WTC11 (cell line): ENCODE measurements at regions of chr2 and their contacts with region 1.

Region 1: GRCh38 chr2:218691234-218691633 is 19.3 kb downstream of the STK36 start:
- DNase-seq: no peak
- ATAC-seq: no peak
- H3K4me3 Mint-ChIP-seq: no peak overlapping the region
- H3K27ac Mint-ChIP-seq: no peak overlapping the region
- H3K4me1 Mint-ChIP-seq: no peaks in the 10 kb centered on the region
- H3K27me3 Mint-ChIP-seq: no peaks in the 10 kb centered on the region
- CTCF ChIP-seq: no peak

Region 2: DNA sequence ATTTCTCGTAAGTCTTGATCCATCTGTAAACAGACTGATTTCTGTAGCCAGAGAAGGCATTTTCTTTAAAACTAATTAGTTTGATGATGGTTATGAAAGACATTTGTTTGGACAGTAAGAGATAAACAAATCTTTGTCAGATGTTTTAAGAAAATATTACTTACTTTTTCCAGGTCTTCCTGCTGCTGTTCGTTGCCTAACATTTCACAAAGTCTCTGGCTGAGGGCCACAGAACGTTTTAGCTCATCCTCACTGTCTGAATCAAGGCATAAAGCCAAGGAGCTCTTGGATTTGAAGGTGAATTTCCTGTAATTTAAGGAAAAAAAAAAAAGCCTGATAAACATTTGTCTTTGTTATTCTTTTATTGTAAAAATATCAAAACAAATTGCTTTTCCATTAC is 214.6 kb before region 1 on chr2:
- CTCF ChIA-PET with region 1: no interaction called
- POLR2A ChIA-PET with region 1: no interaction called
- DNase-seq: no peak
- ATAC-seq: no peak
- H3K4me3 Mint-ChIP-seq: no peak overlapping the region
- H3K27ac Mint-ChIP-seq: peak overlapping the region; percentile 49; the same call in 1 of the 2 replicates
- H3K4me1 Mint-ChIP-seq: no peaks in the 10 kb centered on the region
- H3K27me3 Mint-ChIP-seq: no peaks in the 10 kb centered on the region
- CTCF ChIP-seq: no peak

Region 3: GRCh38 chr2:218582076-218582475 is 109.2 kb before region 1 on chr2:
- CTCF ChIA-PET with region 1: no interaction called
- POLR2A ChIA-PET with region 1: no interaction called
- DNase-seq: no peak
- ATAC-seq: no peak
- H3K4me3 Mint-ChIP-seq: no peak overlapping the region
- H3K27ac Mint-ChIP-seq: no peak overlapping the region
- H3K4me1 Mint-ChIP-seq: peaks cover 20% of the 10 kb centered on the region
- H3K27me3 Mint-ChIP-seq: no peaks in the 10 kb centered on the region
- CTCF ChIP-seq: no peak

Region 4: DNA sequence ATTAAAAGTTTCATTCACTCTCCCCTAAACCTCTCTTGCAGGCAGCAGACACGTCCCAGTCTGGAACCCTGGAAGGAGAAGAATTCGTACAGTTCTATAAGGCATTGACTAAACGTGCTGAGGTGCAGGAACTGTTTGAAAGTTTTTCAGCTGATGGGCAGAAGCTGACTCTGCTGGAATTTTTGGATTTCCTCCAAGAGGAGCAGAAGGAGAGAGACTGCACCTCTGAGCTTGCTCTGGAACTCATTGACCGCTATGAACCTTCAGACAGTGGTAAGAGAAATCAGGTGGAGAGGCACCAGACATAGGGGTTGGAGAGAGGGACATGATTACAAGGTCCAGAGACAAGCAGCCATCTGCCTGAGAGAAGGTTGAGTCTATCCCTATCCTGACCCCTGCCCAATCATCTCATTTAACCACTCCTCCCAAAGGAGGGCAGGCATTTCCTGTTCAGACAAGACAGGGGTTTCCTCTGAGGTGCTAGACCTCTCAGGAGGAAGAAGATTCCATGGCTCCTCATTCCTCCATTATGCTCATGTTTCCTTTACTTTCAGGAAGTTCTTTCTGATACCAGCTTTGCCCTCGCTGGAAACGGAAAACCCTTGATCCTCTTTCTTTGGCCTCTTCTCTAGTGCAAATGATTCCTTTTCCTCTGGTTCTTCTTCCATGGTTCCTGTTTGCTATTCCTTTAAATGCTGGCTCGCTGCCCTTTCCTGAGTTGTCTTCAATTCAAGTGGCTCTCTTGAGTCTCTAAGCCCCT is 68.4 kb before region 1 on chr2:
- CTCF ChIA-PET with region 1: no interaction called
- POLR2A ChIA-PET with region 1: no interaction called
- DNase-seq: no peak
- ATAC-seq: peak; percentile 46
- H3K4me3 Mint-ChIP-seq: no peak overlapping the region
- H3K27ac Mint-ChIP-seq: no peak overlapping the region
- H3K4me1 Mint-ChIP-seq: peaks cover 3% of the 10 kb centered on the region
- H3K27me3 Mint-ChIP-seq: no peaks in the 10 kb centered on the region
- CTCF ChIP-seq: no peak

Region 5: DNA sequence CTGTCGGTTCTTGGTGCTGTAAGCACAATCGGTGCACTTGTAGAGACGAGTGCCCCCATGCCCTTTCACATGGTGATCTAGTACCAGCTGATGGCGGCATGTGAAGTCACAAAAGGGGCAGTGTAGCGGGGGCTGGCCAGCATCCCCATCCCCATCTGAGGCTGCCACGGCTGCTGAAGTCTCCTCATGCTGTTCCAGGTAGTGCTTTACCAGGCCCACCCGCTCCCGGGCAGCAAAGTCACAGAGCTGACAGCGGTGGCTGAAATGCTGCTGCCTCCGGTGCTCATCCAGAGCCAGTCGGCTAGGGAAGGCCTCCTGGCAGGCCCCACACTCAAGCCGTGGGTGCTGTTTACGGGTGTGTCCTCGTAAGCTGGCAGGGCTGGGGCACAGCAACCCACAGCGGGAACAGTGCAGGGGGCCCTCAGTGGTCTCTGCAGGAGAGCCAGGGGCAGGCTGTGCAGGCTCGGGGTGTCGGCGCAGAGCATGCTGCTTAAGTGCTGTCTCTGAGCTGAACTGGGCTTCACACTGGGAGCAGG is 49.0 kb before region 1 on chr2:
- CTCF ChIA-PET with region 1: no interaction called
- POLR2A ChIA-PET with region 1: no interaction called
- DNase-seq: no peak
- ATAC-seq: no peak
- H3K4me3 Mint-ChIP-seq: no peak overlapping the region
- H3K27ac Mint-ChIP-seq: no peak overlapping the region
- H3K4me1 Mint-ChIP-seq: no peaks in the 10 kb centered on the region
- H3K27me3 Mint-ChIP-seq: no peaks in the 10 kb centered on the region
- CTCF ChIP-seq: no peak

Region 6: DNA sequence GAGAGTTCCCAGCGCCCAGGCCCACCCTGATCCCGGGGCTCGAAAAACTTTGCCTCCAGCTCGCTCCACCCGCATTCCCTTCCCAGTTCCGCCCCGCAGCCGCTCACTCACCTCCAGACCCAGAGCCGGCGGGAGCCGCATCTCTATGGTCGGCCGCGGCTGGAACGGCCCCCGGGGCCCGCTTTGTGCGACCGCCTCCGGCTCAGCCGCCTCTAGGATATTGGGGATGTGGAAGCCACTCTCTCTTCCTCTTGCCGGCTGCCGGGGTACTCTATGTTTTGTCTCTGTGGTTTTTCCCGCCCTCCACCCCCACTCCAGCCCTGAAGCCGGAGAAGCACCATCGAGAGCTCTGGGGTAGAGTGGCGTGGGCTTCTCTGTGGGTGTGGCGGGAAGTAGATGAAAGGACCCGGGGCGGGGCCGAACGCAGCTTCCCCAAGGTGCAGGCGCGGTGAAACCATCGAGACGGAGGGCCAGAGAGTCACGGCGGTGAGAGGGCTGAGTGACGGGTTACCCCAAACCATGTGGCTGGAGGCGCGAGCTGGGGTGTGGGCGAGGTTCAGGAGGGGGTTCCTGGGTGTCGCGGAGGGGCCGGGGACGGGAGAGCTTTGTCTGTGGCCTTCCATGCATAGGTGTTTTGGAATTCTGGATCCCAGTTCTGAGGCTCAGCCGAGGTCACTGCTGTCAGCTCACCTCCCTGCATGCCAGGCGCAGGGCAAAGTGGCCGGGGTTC is 31.8 kb before region 1 on chr2 and contains the starts of genes BCS1L and ZNF142:
- CTCF ChIA-PET with region 1: interaction called, 26 read pairs
- POLR2A ChIA-PET with region 1: no interaction called
- DNase-seq: peak; percentile 96
- ATAC-seq: peak; percentile 91
- H3K4me3 Mint-ChIP-seq: peak within 1 kb of the TSS; percentile 93
- H3K27ac Mint-ChIP-seq: peak within 1 kb of the TSS; percentile 90
- H3K4me1 Mint-ChIP-seq: peaks cover 9% of the 10 kb centered on the region
- H3K27me3 Mint-ChIP-seq: no peaks in the 10 kb centered on the region
- CTCF ChIP-seq: no peak
- total RNA-seq, gene BCS1L: 31.4 to 35.4 TPM (median 32.7 TPM) in 3 replicates
- total RNA-seq, gene ZNF142: 25.1 to 33.5 TPM (median 28.7 TPM) in 3 replicates

Region 7: DNA sequence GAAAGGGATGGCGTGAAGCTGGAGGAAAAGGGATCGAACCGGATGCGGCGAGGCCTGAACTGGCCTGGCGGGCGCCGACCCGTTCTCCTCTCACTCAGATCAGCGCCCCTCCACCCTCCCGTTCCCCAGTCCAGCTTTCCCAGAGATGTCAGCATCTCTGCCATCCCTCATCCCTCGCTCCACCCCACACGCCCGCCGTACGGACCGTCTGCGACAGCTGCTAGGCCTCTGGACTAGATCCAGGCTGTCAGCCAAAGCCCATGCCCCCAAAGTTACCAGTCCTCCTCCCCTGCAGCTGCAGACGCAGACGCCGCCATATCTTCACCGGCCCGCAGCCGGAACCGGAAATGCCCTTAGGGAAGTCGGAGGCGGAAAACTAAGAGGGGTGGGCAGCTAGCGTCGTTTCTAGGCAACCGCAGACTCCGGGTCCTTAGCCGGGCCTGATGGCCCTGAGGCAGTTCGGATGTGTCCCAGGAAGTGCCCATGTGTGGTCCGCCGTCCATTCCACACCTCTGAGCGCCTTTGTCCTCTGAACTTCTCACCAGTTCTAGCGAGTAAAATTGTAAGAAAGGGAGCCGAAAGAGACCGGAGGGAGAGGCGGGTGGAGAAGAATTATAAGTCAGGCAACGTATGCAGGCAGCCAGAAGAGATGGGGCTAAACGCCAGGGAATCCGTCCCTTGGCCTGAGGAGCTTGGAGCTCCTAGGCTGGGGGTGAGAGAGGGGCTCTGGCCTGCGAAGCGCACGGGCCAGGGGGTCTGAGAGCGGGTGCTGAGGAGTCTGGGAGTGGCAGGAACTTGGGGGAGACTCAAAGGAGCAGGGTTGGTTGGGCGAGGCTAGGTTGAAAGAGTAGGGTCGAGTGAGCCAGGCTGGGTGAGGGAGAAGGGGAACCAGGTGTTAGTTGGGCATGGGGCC is 19.3 kb before region 1 on chr2 and contains the starts of genes RNF25 and STK36:
- CTCF ChIA-PET with region 1: interaction called, 14 read pairs
- POLR2A ChIA-PET with region 1: interaction called, 4 read pairs
- DNase-seq: peak; percentile 85
- ATAC-seq: peak; percentile 96
- H3K4me3 Mint-ChIP-seq: peak within 1 kb of the TSS; percentile 98
- H3K27ac Mint-ChIP-seq: peak within 1 kb of the TSS; percentile 93
- H3K4me1 Mint-ChIP-seq: peaks cover 13% of the 10 kb centered on the region
- H3K27me3 Mint-ChIP-seq: no peaks in the 10 kb centered on the region
- CTCF ChIP-seq: no peak
- total RNA-seq, gene RNF25: 20.3 to 25.1 TPM (median 23.9 TPM) in 3 replicates
- total RNA-seq, gene STK36: 41.0 to 47.7 TPM (median 42.7 TPM) in 3 replicates

Region 8: DNA sequence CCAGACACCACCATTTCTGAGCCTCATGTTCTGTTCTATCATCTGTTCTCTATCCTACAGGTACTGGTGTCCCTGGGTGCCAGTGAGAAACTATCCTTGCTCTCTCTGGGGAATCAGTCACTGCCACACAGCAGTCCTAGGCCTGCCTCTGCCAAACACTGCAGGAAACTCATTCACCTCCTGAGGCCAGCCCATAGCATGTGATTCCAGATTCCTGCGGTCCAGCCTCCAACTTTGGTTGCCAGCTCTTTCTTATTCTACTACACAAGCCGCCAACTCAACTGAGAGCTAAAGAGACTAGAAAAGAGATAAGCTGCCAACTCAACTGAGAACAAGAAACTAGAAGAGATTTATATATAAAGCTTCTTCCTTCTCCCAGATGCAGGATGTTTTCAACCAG is 10.6 kb after region 1 on chr2:
- CTCF ChIA-PET with region 1: interaction called, 11 read pairs
- POLR2A ChIA-PET with region 1: no interaction called
- DNase-seq: no peak
- ATAC-seq: no peak
- H3K4me3 Mint-ChIP-seq: no peak overlapping the region
- H3K27ac Mint-ChIP-seq: no peak overlapping the region
- H3K4me1 Mint-ChIP-seq: no peaks in the 10 kb centered on the region
- H3K27me3 Mint-ChIP-seq: no peaks in the 10 kb centered on the region
- CTCF ChIP-seq: no peak

Region 9: DNA sequence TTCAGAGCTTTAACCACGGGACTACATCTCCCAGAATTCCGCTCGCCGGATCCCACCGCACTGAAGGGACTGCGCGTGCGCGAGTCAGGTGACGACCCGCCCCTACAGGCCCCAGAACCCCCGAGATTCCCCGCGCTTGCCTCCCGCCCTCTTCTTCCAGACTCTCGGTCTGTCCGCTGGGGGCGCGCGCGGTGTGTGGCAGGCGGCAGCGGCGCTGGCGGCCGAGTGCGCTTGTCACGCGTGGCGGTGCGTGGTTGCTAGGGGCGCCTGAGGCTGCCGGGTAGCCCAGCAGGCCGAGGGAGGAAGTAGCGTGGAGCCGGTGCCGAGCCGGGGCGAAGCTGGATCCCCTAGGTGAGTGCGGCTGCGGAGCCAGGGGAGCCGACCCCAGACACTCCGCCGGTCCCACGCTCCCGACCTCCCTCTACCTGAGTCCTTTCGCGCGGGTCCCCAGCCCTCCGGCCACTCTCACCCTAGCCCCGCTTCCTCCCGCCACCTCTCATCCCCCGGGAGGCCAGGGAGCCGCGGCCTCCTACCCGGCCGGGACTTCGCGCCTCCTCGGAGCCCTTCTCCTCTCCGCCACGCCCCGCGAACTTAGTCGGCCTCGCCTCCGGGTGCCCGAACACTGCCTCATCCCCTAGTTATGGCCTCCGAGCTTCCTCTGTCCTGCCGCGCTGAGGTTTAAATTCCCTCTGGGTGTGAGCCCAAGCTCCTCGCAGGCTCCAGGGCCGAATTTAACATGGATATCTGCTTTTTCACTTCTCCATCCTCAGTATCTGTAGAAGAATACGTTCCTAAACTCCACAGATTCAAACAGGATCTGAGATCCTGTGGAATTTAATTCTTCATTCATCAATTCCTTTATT is 19.7 kb after region 1 on chr2 and contains the start of gene TTLL4:
- CTCF ChIA-PET with region 1: interaction called, 20 read pairs
- POLR2A ChIA-PET with region 1: interaction called, 3 read pairs
- DNase-seq: peak; percentile 97
- ATAC-seq: peak; percentile 93
- H3K4me3 Mint-ChIP-seq: peak within 1 kb of the TSS; percentile 98
- H3K27ac Mint-ChIP-seq: peak within 1 kb of the TSS; percentile 56; the same call in 1 of the 2 replicates
- H3K4me1 Mint-ChIP-seq: peaks cover 11% of the 10 kb centered on the region
- H3K27me3 Mint-ChIP-seq: no peaks in the 10 kb centered on the region; the same call in 1 of the 2 replicates
- CTCF ChIP-seq: peak; percentile 28; the same call in 1 of the 2 replicates
- total RNA-seq, gene TTLL4: 73.7 to 87.4 TPM (median 77.1 TPM) in 3 replicates

Region 10: DNA sequence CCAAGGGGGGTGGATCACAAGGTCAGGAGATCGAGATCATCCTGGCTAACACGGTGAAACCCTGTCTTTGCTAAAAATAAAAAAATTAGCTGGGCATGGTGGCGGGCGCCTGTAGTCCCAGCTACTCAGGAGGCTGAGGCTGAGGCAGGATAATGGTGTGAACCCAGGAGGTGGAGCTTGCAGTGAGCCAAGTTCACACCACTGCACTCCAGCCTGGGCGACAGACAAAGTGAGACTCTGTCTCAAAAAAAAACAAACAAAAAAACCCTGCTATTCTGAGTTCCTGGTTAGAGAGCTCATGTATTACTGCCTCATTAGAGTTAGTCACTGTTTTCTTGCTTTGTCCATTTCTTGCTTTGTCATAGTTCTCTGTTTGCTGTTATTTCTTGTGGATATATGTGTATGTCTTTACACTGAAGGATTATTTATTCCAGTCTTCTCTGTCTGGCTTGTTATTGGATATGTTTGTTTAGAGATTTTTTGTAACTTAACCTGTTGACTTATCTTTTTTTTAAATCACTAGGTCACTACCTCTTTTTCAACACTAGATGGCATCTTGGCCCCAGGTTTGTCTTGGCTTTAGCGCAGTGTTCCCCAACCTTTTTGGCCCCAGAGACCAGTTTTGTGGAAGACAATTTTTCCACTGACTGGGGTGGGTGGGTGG is 36.4 kb after region 1 on chr2:
- CTCF ChIA-PET with region 1: interaction called, 10 read pairs
- POLR2A ChIA-PET with region 1: interaction called, 3 read pairs
- DNase-seq: no peak
- ATAC-seq: no peak
- H3K4me3 Mint-ChIP-seq: no peak overlapping the region
- H3K27ac Mint-ChIP-seq: no peak overlapping the region
- H3K4me1 Mint-ChIP-seq: peaks cover 22% of the 10 kb centered on the region
- H3K27me3 Mint-ChIP-seq: no peaks in the 10 kb centered on the region
- CTCF ChIP-seq: no peak

Region 11: GRCh38 chr2:218852911-218853667 is 161.9 kb after region 1 on chr2:
- CTCF ChIA-PET with region 1: interaction called, 14 read pairs
- POLR2A ChIA-PET with region 1: interaction called, 3 read pairs
- DNase-seq: peak; percentile 83
- ATAC-seq: peak; percentile 80
- H3K4me3 Mint-ChIP-seq: no peak overlapping the region
- H3K27ac Mint-ChIP-seq: no peak overlapping the region
- H3K4me1 Mint-ChIP-seq: peaks cover 37% of the 10 kb centered on the region
- H3K27me3 Mint-ChIP-seq: peaks cover 60% of the 10 kb centered on the region
- CTCF ChIP-seq: peak; percentile 87